B cell (primary cell): ENCODE measurements at regions of chr6 and their contacts with region 1.

Region 1: DNA sequence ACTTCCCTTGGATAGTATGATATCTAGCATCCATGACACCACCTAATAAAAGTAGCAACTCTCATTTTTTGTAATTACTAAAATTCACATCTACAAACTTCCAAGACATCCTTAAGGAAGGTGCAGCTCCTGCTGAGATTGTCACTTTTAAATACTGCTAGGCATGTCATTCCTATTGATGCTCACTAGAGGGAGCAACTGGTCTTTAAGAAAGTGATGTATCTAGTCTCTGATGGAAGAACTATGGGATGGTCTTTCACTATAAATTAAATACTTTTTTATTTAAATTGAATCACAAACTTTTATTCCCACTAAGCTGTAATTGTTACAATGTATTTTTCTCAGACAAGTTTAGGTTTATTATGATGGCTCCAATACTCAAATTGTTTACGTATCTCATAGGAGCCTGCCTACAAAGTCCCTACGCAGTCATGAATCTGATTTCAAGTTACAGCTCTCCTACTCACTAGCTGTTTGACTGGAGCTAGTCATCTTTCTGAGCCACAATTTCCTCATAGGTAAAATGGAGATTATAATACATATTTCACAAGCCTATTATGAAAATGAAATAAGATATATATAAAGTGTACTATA is 8.1 kb upstream of the TSPYL1 start:
- DNase-seq: peak; percentile 67
- ATAC-seq: peak; percentile 76
- H3K4me3 ChIP-seq: no peak overlapping the region
- H3K4me3 Mint-ChIP-seq: no peak overlapping the region
- H3K27ac ChIP-seq: no peak overlapping the region
- H3K27ac Mint-ChIP-seq: no peak overlapping the region
- H3K4me1 ChIP-seq: no peaks in the 10 kb centered on the region
- H3K4me1 Mint-ChIP-seq: peaks cover 5% of the 10 kb centered on the region
- H3K27me3 ChIP-seq: no peaks in the 10 kb centered on the region
- H3K27me3 Mint-ChIP-seq: no peaks in the 10 kb centered on the region
- CTCF ChIP-seq: peak; percentile 99

Region 2: GRCh38 chr6:116210750-116211425 is 76.9 kb before region 1 on chr6:
- CTCF ChIA-PET with region 1: no interaction called
- POLR2A ChIA-PET with region 1: no interaction called
- intact Hi-C with region 1: no loop called
- DNase-seq: no peak
- ATAC-seq: no peak
- H3K4me3 ChIP-seq: no peak overlapping the region
- H3K4me3 Mint-ChIP-seq: no peak overlapping the region
- H3K27ac ChIP-seq: no peak overlapping the region
- H3K27ac Mint-ChIP-seq: no peak overlapping the region
- H3K4me1 ChIP-seq: no peaks in the 10 kb centered on the region
- H3K4me1 Mint-ChIP-seq: no peaks in the 10 kb centered on the region
- H3K27me3 ChIP-seq: no peaks in the 10 kb centered on the region
- H3K27me3 Mint-ChIP-seq: no peaks in the 10 kb centered on the region
- CTCF ChIP-seq: no peak

Region 3: DNA sequence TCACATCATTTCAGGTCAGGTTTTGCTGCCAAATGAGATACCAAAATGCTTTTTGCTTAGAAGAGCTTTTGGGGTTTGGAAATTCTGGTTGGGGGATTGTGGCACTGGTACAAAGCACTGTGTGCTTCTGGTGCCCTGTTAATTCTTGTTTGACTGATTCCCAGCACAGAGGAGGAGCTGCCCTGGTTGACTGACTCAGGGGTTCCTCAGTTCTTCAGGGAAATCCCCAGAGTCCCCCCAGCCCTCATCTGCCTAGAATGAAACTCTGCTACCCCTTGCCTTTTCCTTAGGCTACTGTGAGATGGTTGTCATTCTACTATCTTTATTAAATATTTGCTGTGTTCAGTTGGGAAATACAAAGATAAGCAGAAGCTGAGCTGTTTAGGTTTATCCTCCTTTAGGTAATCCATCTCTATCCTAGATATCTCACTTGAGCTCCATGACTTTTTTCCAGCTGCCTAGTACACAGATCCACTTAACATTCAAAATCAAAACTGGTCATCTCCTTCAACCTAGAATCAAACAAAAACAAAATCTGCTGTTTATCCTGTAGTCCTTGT is 16.8 kb after region 1 on chr6:
- CTCF ChIA-PET with region 1: interaction called, 10 read pairs
- POLR2A ChIA-PET with region 1: no interaction called
- intact Hi-C with region 1: no loop called
- DNase-seq: no peak
- ATAC-seq: no peak
- H3K4me3 ChIP-seq: no peak overlapping the region
- H3K4me3 Mint-ChIP-seq: no peak overlapping the region
- H3K27ac ChIP-seq: no peak overlapping the region
- H3K27ac Mint-ChIP-seq: no peak overlapping the region
- H3K4me1 ChIP-seq: peaks cover 4 to 7% of the 10 kb centered on the region in 2 donors
- H3K4me1 Mint-ChIP-seq: peaks cover 9% of the 10 kb centered on the region
- H3K27me3 ChIP-seq: no peaks in the 10 kb centered on the region
- H3K27me3 Mint-ChIP-seq: no peaks in the 10 kb centered on the region
- CTCF ChIP-seq: no peak

Region 4: GRCh38 chr6:116450769-116451740 is 163.3 kb after region 1 on chr6:
- CTCF ChIA-PET with region 1: interaction called, 86 read pairs
- POLR2A ChIA-PET with region 1: no interaction called
- intact Hi-C with region 1: no loop called
- DNase-seq: peak; percentile 69
- ATAC-seq: peak; percentile 88
- H3K4me3 ChIP-seq: no peak overlapping the region
- H3K4me3 Mint-ChIP-seq: peak overlapping the region; percentile 54
- H3K27ac ChIP-seq: no peak overlapping the region
- H3K27ac Mint-ChIP-seq: peak overlapping the region; percentile 76
- H3K4me1 ChIP-seq: peaks cover 15 to 19% of the 10 kb centered on the region in 2 donors
- H3K4me1 Mint-ChIP-seq: peaks cover 33% of the 10 kb centered on the region
- H3K27me3 ChIP-seq: no peaks in the 10 kb centered on the region
- H3K27me3 Mint-ChIP-seq: no peaks in the 10 kb centered on the region
- CTCF ChIP-seq: no peak

Region 5: DNA sequence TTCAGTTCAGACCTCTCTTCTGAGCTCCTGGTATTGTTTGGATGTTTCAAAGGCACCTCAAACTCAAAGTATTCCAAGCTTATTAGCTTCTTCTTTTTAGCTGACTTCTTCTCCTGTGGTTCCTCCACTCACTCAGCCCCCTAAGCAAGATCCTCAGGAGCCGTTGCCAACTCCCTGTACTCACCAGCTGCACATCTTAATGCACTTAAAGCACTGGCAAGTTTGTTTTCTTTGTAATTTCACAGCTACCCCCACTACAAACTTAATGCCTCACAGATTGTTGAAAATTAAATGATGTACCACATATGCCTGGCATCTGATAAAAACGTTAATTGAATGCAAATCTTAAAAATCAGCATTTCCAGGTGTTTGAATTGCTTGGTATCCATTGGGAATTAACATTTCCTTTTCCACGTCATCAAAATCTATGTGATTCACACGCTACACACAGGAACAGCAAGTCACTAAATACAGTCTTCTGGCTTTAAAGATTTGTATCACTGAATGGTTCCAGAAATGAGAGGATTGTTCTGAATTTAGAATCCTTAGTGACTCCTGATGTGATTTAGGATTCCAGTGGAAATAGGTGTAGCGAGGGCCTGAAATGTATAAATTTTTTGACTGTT is 197.9 kb after region 1 on chr6:
- CTCF ChIA-PET with region 1: no interaction called
- POLR2A ChIA-PET with region 1: no interaction called
- intact Hi-C with region 1: no loop called
- DNase-seq: no peak
- ATAC-seq: no peak
- H3K4me3 ChIP-seq: no peak overlapping the region
- H3K4me3 Mint-ChIP-seq: no peak overlapping the region
- H3K27ac ChIP-seq: no peak overlapping the region
- H3K27ac Mint-ChIP-seq: no peak overlapping the region
- H3K4me1 ChIP-seq: no peaks in the 10 kb centered on the region
- H3K4me1 Mint-ChIP-seq: no peaks in the 10 kb centered on the region
- H3K27me3 ChIP-seq: no peaks in the 10 kb centered on the region
- H3K27me3 Mint-ChIP-seq: peaks cover 7% of the 10 kb centered on the region
- CTCF ChIP-seq: no peak

Region 6: GRCh38 chr6:116531675-116532570 is 244.1 kb after region 1 on chr6:
- CTCF ChIA-PET with region 1: interaction called, 151 read pairs
- POLR2A ChIA-PET with region 1: no interaction called
- intact Hi-C with region 1: loop called (anchors 1 kb)
- DNase-seq: peak; percentile 82
- ATAC-seq: peak; percentile 98
- H3K4me3 ChIP-seq: no peak overlapping the region
- H3K4me3 Mint-ChIP-seq: no peak overlapping the region
- H3K27ac ChIP-seq: no peak overlapping the region
- H3K27ac Mint-ChIP-seq: no peak overlapping the region
- H3K4me1 ChIP-seq: peaks cover 0 to 5% of the 10 kb centered on the region in 2 donors
- H3K4me1 Mint-ChIP-seq: peaks cover 11% of the 10 kb centered on the region
- H3K27me3 ChIP-seq: no peaks in the 10 kb centered on the region
- H3K27me3 Mint-ChIP-seq: peaks cover 3% of the 10 kb centered on the region
- CTCF ChIP-seq: peak; percentile 90

Region 7: GRCh38 chr6:116570856-116571682 is 283.3 kb after region 1 on chr6 and contains the start of gene RWDD1:
- CTCF ChIA-PET with region 1: interaction called, 17 read pairs
- POLR2A ChIA-PET with region 1: interaction called, 5 read pairs
- intact Hi-C with region 1: no loop called
- DNase-seq: peak; percentile 99
- ATAC-seq: peak; percentile 93
- H3K4me3 ChIP-seq: peak within 1 kb of the TSS; percentile 81 to 93 (median 83)
- H3K4me3 Mint-ChIP-seq: peak within 1 kb of the TSS; percentile 97
- H3K27ac ChIP-seq: peak within 1 kb of the TSS; percentile 93 to 96
- H3K27ac Mint-ChIP-seq: peak within 1 kb of the TSS; percentile 97
- H3K4me1 ChIP-seq: peaks cover 24% of the 10 kb centered on the region in 2 donors
- H3K4me1 Mint-ChIP-seq: peaks cover 40% of the 10 kb centered on the region
- H3K27me3 ChIP-seq: no peaks in the 10 kb centered on the region
- H3K27me3 Mint-ChIP-seq: no peaks in the 10 kb centered on the region
- CTCF ChIP-seq: no peak
- total RNA-seq, gene RWDD1: 21.8 and 22.4 TPM in 2 replicates